Activated naive CD4-positive, alpha-beta T cell treated with anti-CD3 and anti-CD28 coated beads for 36 hours (primary cell): ENCODE measurements at regions of chr1 and their contacts with region 1.

Region 1: GRCh38 chr1:114757455-114758250 is at the start of gene CSDE1:
- DNase-seq: peak; percentile 99
- H3K4me3 Mint-ChIP-seq: peak within 1 kb of the TSS; percentile 99
- H3K27ac Mint-ChIP-seq: peak within 1 kb of the TSS; percentile 100
- H3K4me1 Mint-ChIP-seq: peaks cover 50% of the 10 kb centered on the region
- H3K27me3 Mint-ChIP-seq: no peaks in the 10 kb centered on the region
- total RNA-seq, gene CSDE1: 533 to 579 TPM

Region 2: DNA sequence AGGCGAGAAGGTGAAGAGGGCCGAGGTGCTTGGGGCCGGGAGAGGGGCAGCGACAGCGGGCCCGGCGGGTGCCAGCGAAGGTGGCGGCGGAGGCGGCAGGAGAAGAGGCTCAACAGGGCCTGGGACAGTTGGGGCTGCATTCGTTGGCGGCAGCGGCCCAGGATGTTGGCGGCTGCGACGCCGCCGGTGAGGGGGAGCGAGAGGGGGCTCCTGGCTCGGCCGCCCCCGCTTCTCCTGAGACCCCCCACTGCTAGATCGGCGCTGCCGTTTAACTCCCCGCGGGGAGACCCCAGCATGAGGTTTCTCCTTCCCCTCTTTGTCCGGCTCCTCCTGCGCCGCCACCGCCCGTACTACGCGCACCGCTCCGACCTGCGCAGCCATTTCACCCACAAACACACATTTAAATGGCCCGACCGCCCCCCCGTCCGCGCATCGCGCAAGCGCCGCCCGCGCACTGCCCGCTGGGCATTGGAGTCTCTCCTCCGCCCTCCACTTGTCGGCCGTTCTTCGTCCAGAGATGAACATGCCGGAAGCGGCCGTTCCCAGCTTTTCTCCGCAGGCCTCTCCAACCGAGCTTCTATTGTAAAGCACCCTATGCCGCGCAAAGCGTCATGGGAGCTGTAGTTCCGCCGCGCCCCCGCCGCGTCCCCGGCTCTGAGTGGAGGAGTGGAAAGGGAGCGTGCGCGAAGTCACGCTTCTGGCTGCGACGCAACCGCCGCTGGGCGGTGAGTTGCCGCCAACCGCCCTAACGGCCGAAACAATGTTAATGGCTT is 945.6 kb before region 1 on chr1 and contains the start of gene RSBN1:
- CTCF ChIA-PET with region 1: no interaction called
- intact Hi-C with region 1: loop called (anchors 5 kb)
- DNase-seq: peak; percentile 99
- H3K4me3 Mint-ChIP-seq: peak within 1 kb of the TSS; percentile 98
- H3K27ac Mint-ChIP-seq: peak within 1 kb of the TSS; percentile 94
- H3K4me1 Mint-ChIP-seq: peaks cover 31% of the 10 kb centered on the region
- H3K27me3 Mint-ChIP-seq: no peaks in the 10 kb centered on the region
- total RNA-seq, gene RSBN1: 13.6 to 14.3 TPM

Region 3: GRCh38 chr1:114346480-114347029 is 411.1 kb before region 1 on chr1:
- CTCF ChIA-PET with region 1: no interaction called
- intact Hi-C with region 1: loop called (anchors 2 kb)
- DNase-seq: peak; percentile 98
- H3K4me3 Mint-ChIP-seq: peak overlapping the region; percentile 84
- H3K27ac Mint-ChIP-seq: peak overlapping the region; percentile 80
- H3K4me1 Mint-ChIP-seq: peaks cover 18% of the 10 kb centered on the region
- H3K27me3 Mint-ChIP-seq: no peaks in the 10 kb centered on the region

Region 4: GRCh38 chr1:114581335-114582287 is 176.0 kb before region 1 on chr1 and contains the start of gene BCAS2:
- CTCF ChIA-PET with region 1: no interaction called
- intact Hi-C with region 1: loop called (anchors 1 kb)
- DNase-seq: peak; percentile 99
- H3K4me3 Mint-ChIP-seq: peak within 1 kb of the TSS; percentile 99
- H3K27ac Mint-ChIP-seq: peak within 1 kb of the TSS; percentile 96
- H3K4me1 Mint-ChIP-seq: peaks cover 32% of the 10 kb centered on the region
- H3K27me3 Mint-ChIP-seq: no peaks in the 10 kb centered on the region
- total RNA-seq, gene BCAS2: 46.5 to 48.0 TPM

Region 5: GRCh38 chr1:114745291-114745690 is 12.4 kb before region 1 on chr1:
- CTCF ChIA-PET with region 1: interaction called, 5 read pairs
- intact Hi-C with region 1: loop called (anchors 1 kb)
- DNase-seq: peak; percentile 14
- H3K4me3 Mint-ChIP-seq: no peak overlapping the region
- H3K27ac Mint-ChIP-seq: no peak overlapping the region
- H3K4me1 Mint-ChIP-seq: peaks cover 74% of the 10 kb centered on the region
- H3K27me3 Mint-ChIP-seq: no peaks in the 10 kb centered on the region

Region 6: GRCh38 chr1:115098979-115099692 is 341.5 kb after region 1 on chr1:
- CTCF ChIA-PET with region 1: no interaction called
- intact Hi-C with region 1: loop called (anchors 2 kb)
- DNase-seq: peak; percentile 76
- H3K4me3 Mint-ChIP-seq: peak overlapping the region; percentile 78
- H3K27ac Mint-ChIP-seq: peak overlapping the region; percentile 57
- H3K4me1 Mint-ChIP-seq: peaks cover 30% of the 10 kb centered on the region
- H3K27me3 Mint-ChIP-seq: no peaks in the 10 kb centered on the region